ENCODE measurements at regions of chr17 and their contacts with region 1.

Region 1: GRCh38 chr17:36107660-36108059 is 4.0 kb downstream of the CCL4 start:
- DNase-seq: peak in 1 of 2 donors; percentile 59
- ATAC-seq: peak; percentile 23 to 45 (median 31)
- H3K4me3 ChIP-seq: no peak overlapping the region
- H3K4me3 Mint-ChIP-seq: peak overlapping the region; percentile 74
- H3K27ac ChIP-seq: peak overlapping the region; percentile 82
- H3K27ac Mint-ChIP-seq: peak overlapping the region; percentile 94 to 96
- H3K4me1 ChIP-seq: peaks cover 61% of the 10 kb centered on the region
- H3K4me1 Mint-ChIP-seq: peaks cover 78 to 98% of the 10 kb centered on the region in 2 donors
- H3K27me3 ChIP-seq: no peaks in the 10 kb centered on the region
- H3K27me3 Mint-ChIP-seq: no peaks in the 10 kb centered on the region
- CTCF ChIP-seq: no peak

Region 2: DNA sequence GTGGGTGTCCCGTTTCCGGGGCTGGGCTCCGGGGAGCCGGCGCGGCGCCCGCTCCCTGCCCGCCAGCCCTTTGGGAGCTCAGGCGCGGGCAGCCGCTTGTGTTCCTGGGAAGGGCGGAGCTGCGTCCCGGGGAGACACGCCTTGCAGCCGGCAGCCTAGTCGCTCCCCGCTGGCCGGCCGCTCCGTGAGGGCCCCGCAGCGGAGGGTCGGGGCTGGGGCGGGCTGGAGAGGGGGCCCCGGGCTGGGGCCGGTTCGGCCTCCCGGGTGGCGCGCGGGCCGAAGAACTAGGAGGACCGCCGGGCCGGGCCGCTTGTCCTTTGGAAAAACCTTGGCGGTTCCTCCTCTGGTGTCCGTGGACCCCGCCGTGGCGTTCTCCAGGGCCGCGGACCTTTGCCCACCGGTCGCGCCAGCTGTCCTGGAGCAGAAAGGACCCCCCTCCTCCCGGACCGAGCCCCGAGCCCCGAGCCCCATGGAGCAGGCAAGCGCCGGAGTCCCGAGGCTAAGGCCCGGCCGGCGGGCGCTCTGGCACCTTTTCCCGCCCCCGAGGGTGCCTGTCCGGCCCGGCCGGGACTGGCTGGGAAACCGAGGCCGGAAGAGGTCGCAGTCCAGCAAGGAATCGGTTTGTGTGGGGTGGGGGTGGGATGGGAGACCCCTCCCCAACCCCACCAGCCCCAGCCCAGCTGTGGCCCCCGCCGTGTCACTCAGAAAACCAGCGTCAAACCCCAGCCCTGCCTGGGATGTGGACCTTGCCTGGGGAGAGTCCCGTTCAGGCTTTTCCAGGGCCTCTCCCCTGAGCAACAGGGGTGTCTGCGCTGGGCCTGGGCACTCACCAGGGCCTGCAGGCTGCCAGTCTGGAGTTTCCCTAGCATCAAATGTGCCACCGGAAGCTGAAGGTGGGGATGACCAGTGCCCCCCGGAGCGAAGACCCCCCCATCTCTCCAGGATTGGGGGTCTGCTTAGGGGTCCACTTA is 75.6 kb after region 1 on chr17:
- intact Hi-C with region 1: loop called (anchors 1 kb)
- DNase-seq: peak; percentile 62 to 68
- ATAC-seq: peak; percentile 58 to 61 (median 59)
- H3K4me3 ChIP-seq: peak overlapping the region; percentile 28
- H3K4me3 Mint-ChIP-seq: peak overlapping the region; percentile 92
- H3K27ac ChIP-seq: no peak overlapping the region
- H3K27ac Mint-ChIP-seq: peak overlapping the region; percentile 93 to 98
- H3K4me1 ChIP-seq: peaks cover 62% of the 10 kb centered on the region
- H3K4me1 Mint-ChIP-seq: peaks cover 48 to 73% of the 10 kb centered on the region in 2 donors
- H3K27me3 ChIP-seq: peaks cover 9% of the 10 kb centered on the region
- H3K27me3 Mint-ChIP-seq: no peaks in the 10 kb centered on the region
- CTCF ChIP-seq: no peak

Measured in natural killer cell (primary cell).